ENCODE measurements at regions of chr11 and their contacts with region 1.

Region 1: DNA sequence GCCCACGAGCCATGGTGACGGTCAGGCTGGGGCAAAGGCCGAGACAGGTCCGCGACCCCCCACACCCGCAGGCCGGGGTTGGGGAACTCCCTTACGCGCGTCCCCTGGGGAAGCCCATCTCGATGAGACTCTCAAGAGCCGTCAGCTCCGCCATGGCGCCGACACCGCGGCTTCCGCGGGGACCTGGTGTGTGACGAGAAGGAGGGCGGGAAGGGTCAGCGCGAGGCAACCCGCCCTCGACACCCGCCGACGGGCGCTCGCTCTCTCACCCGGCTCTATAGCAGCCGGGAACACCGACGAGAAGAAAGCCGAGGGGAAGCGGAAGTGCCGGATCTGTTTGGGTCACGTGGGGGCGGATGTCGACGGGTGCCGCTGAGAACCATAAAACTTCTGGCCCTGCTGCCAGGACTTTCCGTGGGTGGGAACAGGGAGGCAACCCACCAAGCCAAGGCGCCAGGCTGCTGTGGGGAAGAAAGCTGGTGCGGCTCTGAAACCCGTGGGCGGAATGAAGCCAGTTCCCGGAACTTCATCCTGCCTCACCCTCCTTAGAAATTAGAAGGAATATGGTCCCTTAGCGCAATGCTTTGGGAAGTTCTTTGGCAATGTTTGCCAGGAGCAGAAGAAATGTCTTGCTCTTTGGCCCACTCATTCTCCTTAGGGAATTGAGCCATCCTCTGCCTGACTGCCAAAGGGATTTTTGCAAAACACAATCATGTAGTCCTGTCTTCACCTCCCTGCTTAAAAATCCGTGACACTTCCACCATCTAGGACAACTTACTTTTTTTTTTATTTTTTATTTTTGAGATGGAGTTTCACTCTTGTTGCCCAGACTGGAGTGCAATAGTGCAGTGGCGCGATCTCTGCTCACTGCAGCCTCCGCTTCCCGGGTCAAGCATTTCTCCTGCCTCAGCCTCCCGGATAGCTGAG is at the start of gene UBXN1:
- DNase-seq: peak; percentile 93
- ATAC-seq: peak; percentile 88
- H3K4me3 Mint-ChIP-seq: peak within 1 kb of the TSS; percentile 82
- H3K27ac Mint-ChIP-seq: peak within 1 kb of the TSS; percentile 92
- H3K4me1 Mint-ChIP-seq: peaks cover 28% of the 10 kb centered on the region
- H3K27me3 Mint-ChIP-seq: no peaks in the 10 kb centered on the region
- total RNA-seq, gene UBXN1: 95.6 to 119 TPM

Region 2: DNA sequence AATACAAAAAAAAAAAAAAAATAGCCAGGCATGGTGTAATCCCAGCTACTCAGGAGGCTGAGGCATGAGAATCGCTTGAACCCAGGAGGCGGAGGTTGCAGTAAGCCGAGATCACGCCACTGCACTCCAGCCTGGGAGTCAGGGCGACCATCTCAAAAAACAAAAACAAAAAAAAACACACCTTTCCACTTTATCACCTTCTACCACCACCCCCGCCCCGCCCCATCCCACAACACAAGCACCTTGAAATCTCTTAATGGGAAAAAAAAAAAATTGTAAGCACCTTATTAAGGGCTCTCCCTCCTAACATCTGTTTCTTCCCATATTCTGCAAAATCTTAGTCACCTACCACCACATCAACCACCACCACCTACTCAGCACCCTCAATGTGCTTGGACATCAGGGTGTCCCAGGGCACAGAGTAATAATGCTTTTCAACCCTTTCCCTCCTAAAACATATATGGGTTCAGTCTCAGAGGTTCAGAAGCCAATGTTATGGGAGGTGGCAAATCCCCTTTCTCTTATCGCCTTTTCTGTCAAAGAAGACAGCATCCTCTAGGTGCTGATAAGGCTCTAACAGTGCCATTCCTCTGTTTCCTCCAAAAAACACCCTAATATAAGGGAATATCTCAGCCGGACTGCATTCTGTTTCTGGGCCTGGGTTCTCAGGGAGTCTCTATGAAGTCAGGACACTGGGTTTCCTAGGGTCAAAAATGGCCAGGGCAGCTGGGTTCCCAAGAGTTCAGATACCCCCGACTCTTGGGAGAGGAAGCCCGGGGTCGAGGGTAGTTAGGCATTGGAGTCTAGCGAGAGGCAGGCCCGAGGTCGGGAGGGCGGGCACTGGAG is 26.6 kb before region 1 on chr11:
- CTCF ChIA-PET with region 1: interaction called, 3 read pairs
- POLR2A ChIA-PET with region 1: interaction called, 3 read pairs
- intact Hi-C with region 1: loop called in 1 of 2 experiments (anchors 1 kb)
- DNase-seq: no peak
- ATAC-seq: no peak
- H3K4me3 Mint-ChIP-seq: peak overlapping the region; percentile 88
- H3K27ac Mint-ChIP-seq: peak overlapping the region; percentile 91
- H3K4me1 Mint-ChIP-seq: peaks cover 23% of the 10 kb centered on the region
- H3K27me3 Mint-ChIP-seq: no peaks in the 10 kb centered on the region

Region 3: GRCh38 chr11:62689421-62690183 is 10.6 kb after region 1 on chr11 and contains the start of gene LRRN4CL:
- CTCF ChIA-PET with region 1: interaction called, 32 read pairs
- POLR2A ChIA-PET with region 1: no interaction called
- intact Hi-C with region 1: no loop called
- DNase-seq: no peak
- ATAC-seq: no peak
- H3K4me3 Mint-ChIP-seq: no peak within 1 kb of the TSS
- H3K27ac Mint-ChIP-seq: no peak within 1 kb of the TSS
- H3K4me1 Mint-ChIP-seq: peaks cover under 1% of the 10 kb centered on the region
- H3K27me3 Mint-ChIP-seq: peaks cover 11% of the 10 kb centered on the region
- total RNA-seq, gene LRRN4CL: 0.16 TPM in 1 of 2 experiments, not detected in the other

Region 4: GRCh38 chr11:62694455-62695167 is 15.6 kb after region 1 on chr11:
- CTCF ChIA-PET with region 1: interaction called, 32 read pairs
- POLR2A ChIA-PET with region 1: no interaction called
- intact Hi-C with region 1: no loop called
- DNase-seq: peak; percentile 86
- ATAC-seq: peak; percentile 95
- H3K4me3 Mint-ChIP-seq: no peak overlapping the region
- H3K27ac Mint-ChIP-seq: no peak overlapping the region
- H3K4me1 Mint-ChIP-seq: peaks cover 5% of the 10 kb centered on the region
- H3K27me3 Mint-ChIP-seq: no peaks in the 10 kb centered on the region